ENCODE measurements at regions of chr14 and their contacts with region 1.

Region 1: GRCh38 chr14:91177073-91178034 is 63.5 kb downstream of the DGLUCY start:
- DNase-seq: peak; percentile 82
- ATAC-seq: peak; percentile 81
- H3K4me3 Mint-ChIP-seq: no peak overlapping the region
- H3K27ac Mint-ChIP-seq: peak overlapping the region; percentile 85
- H3K4me1 Mint-ChIP-seq: peaks cover 36% of the 10 kb centered on the region
- H3K27me3 Mint-ChIP-seq: no peaks in the 10 kb centered on the region

Region 2: DNA sequence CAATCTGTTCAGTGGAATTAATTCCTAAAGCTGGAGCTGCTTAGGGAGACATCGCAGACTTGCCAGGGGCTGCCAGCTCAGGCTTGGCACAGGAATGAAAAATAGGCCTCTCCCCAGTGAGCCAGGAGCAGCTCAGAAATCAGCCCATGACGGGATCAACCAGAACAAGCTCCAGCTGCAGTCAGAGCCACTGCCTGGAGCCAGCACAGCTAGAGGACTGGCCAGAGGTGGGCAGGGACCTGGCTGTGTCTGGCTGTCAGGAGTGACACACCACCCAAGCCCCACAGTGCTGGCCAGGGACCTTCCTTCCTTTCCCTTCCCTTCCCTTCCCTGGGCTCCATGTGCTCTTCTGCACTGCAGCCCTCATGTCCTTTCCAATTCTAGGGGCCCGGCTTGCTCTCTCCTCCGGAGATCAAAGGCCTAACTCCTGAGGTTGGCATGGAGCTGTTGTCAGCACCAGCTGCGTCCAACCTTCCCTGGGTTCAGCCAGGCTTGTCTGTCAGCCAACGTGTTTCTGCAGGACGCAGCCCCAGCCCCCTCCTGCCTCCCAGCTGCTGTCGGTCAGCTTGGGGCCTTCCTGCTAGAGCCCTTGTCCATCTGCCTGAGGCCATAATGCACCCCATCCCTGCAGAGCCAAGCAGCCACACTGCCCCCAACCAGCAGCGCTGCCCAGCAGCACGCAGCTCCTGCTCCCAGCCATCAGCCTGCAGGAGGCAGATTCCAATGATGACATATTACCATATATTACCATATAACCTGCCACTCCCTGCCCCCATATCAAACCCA is 631.2 kb before region 1 on chr14:
- CTCF ChIA-PET with region 1: no interaction called
- POLR2A ChIA-PET with region 1: no interaction called
- DNase-seq: no peak
- ATAC-seq: no peak
- H3K4me3 Mint-ChIP-seq: no peak overlapping the region
- H3K27ac Mint-ChIP-seq: no peak overlapping the region
- H3K4me1 Mint-ChIP-seq: no peaks in the 10 kb centered on the region
- H3K27me3 Mint-ChIP-seq: no peaks in the 10 kb centered on the region

Region 3: GRCh38 chr14:90894241-90894640 is 283.1 kb before region 1 on chr14:
- CTCF ChIA-PET with region 1: interaction called, 13 read pairs
- POLR2A ChIA-PET with region 1: no interaction called
- DNase-seq: no peak
- ATAC-seq: no peak
- H3K4me3 Mint-ChIP-seq: no peak overlapping the region
- H3K27ac Mint-ChIP-seq: no peak overlapping the region
- H3K4me1 Mint-ChIP-seq: no peaks in the 10 kb centered on the region
- H3K27me3 Mint-ChIP-seq: no peaks in the 10 kb centered on the region

Region 4: DNA sequence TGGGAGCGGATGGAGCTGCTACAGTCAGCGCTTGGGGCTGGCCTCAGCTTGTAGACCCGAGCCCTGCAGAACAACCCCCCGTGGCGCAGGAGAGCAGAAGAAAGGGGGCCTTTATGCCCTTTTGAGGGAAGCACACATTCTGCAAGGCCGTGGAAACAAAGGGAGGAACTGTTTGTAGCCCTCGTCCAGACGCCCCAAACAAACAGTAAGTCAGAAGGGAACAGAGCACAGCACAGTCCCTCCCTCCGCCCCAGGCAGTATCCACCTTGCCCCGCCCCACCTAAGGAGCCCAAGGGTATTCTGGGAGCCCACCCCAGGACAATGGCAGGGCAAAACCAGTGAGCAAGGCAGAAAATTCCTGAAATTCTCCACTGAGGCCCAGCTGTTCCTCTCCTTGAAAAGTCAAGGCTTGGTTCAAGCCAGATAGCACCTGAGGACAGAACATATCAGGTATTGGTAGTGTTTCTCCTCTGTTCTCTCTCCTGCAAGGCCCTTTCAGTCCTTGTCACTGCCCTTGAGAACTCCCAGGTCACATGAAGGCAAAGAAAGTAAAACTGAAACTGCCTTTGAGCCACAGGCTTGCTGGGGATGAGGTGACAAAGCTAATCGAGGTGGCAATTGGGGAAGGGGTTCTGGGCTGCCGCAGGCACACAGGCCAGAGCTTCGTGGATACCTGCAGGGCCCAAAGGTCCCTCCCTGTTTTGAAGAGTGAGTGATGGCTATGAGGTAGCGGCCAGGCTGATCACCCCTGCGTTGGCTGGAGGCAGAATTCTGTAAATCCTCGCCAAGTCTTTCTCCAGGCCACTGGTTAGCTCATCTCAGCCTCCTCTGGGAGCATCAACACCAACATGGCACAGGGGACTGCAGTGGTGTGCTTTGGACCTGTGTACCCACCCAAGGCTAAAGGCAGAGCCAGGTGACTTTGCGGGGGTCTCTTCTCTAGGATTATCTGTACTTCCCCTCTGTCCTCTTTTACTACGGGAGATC is 63.0 kb before region 1 on chr14:
- CTCF ChIA-PET with region 1: interaction called, 20 read pairs
- POLR2A ChIA-PET with region 1: no interaction called
- DNase-seq: peak; percentile 86
- ATAC-seq: peak; percentile 81
- H3K4me3 Mint-ChIP-seq: peak overlapping the region; percentile 93
- H3K27ac Mint-ChIP-seq: peak overlapping the region; percentile 91
- H3K4me1 Mint-ChIP-seq: peaks cover 68% of the 10 kb centered on the region
- H3K27me3 Mint-ChIP-seq: no peaks in the 10 kb centered on the region

Region 5: DNA sequence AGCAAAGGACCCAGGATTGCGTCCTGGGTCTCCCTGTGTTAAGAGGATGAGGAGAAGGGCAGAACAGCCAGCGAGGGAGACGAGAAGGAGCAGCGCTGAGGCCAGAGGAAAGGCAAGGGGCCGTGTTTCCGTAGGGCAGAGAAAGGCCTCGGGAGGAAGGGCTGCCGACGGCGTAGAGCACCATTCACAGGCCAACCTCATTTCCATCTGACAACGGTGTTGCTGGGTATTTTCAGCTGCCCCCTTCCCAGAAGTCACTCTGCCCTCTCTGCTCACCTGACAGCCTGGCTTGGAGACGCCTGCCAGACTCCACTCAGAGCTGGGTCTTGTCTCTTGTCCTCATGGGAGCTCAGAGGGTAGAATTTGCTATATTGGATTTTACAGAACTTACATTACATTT is 15.7 kb after region 1 on chr14:
- CTCF ChIA-PET with region 1: interaction called, 30 read pairs
- POLR2A ChIA-PET with region 1: interaction called, 5 read pairs
- DNase-seq: no peak
- ATAC-seq: no peak
- H3K4me3 Mint-ChIP-seq: no peak overlapping the region
- H3K27ac Mint-ChIP-seq: peak overlapping the region; percentile 7
- H3K4me1 Mint-ChIP-seq: peaks cover 52% of the 10 kb centered on the region
- H3K27me3 Mint-ChIP-seq: no peaks in the 10 kb centered on the region

Region 6: DNA sequence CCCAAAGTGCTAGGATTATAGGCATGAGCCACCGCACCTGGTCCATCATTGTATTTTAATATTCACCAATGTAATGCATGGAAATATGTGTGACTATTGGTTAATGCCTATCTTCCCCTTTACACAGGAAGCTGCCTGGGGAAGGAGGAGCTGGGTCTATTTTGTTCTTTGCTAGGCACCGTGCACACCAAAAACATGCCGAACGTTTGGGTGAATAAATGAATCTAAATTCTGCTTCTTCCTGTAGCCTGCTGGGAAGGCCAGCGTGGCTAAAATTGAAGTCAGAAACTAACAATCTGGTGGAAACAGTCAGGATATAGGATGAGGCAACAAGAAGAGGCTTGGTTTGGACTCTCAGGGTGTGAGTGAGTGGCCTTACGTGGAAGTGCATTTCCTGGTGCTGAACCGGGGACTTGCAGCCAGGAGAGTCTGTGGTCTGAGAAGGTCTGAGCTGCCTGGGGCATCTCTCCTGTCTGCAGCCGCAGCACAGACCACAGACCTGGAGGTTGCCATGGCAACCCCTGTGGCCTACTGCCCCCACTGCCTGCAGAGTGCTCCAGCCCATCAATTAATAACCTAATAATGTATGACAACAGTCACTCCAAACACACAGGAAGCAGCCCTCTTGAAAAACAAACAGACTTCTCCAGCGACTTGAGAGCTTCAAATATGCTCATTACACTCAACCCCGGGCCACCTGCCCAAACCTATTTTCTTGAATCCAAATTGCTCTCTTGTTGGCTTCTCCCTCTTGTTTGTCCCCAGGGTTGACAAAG is 72.7 kb after region 1 on chr14:
- CTCF ChIA-PET with region 1: interaction called, 105 read pairs
- POLR2A ChIA-PET with region 1: interaction called, 55 read pairs
- DNase-seq: peak; percentile 81
- ATAC-seq: peak; percentile 52
- H3K4me3 Mint-ChIP-seq: peak overlapping the region; percentile 66
- H3K27ac Mint-ChIP-seq: peak overlapping the region; percentile 93
- H3K4me1 Mint-ChIP-seq: peaks cover 89% of the 10 kb centered on the region
- H3K27me3 Mint-ChIP-seq: no peaks in the 10 kb centered on the region

Region 7: GRCh38 chr14:91286530-91286937 is 109.2 kb after region 1 on chr14:
- CTCF ChIA-PET with region 1: interaction called, 130 read pairs
- POLR2A ChIA-PET with region 1: interaction called, 6 read pairs
- DNase-seq: peak; percentile 88
- ATAC-seq: peak; percentile 85
- H3K4me3 Mint-ChIP-seq: no peak overlapping the region
- H3K27ac Mint-ChIP-seq: peak overlapping the region; percentile 54
- H3K4me1 Mint-ChIP-seq: peaks cover 45% of the 10 kb centered on the region
- H3K27me3 Mint-ChIP-seq: no peaks in the 10 kb centered on the region

Measured in activated CD8-positive, alpha-beta T cell treated with anti-CD3 and anti-CD28 coated beads, Interleukin-2, amount 10 ng/mL, durations not matched to agents 7 days and 5 days (primary cell).